Activated CD4-positive, alpha-beta T cell treated with anti-CD3 and anti-CD28 coated beads for 36 hours (primary cell): ENCODE measurements at regions of chr9 and their contacts with region 1.

Region 1: DNA sequence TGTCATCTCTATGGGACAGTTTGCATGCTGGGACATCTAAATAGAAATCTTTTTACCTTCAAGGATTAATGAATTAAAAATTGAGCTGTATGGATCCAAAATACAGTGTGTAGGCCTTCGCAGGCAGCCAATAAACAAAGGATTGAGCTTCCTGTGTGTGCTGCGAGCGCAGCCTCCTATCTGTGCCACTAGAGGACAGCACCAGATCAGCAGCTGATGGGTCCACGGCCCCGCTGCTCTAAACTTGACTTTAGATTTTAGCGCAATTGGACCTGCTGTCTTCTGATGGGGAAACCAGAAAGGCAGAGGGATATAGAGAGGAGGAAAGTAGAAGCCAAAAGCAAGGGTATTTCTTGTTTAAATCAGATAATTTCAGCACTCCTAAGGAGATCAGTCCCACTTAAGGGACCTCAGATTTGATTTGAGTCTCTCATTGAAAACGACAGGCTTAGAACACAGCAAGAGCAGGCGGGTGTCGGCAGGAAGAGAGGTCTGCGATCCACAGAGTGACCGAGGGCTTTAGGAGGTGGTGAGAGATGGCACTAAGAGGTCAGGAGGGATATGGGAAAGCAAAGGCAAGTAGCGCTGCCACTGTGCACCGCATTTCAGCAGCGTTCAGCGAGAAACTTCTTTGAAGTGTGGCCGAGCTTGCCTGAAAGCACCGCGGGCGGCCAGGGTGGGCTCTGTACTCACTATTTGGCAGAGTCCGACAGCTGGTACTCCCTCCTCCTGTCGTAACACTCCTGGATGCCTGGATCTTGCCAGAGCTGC is 214.3 kb downstream of the GNA14 start:
- DNase-seq: peak; percentile 77
- ATAC-seq: peak; percentile 99
- H3K4me3 Mint-ChIP-seq: no peak overlapping the region
- H3K27ac Mint-ChIP-seq: no peak overlapping the region
- H3K4me1 Mint-ChIP-seq: peaks cover 3% of the 10 kb centered on the region
- H3K27me3 Mint-ChIP-seq: no peaks in the 10 kb centered on the region

Region 2: GRCh38 chr9:77251050-77251449 is 182.8 kb before region 1 on chr9:
- CTCF ChIA-PET with region 1: no interaction called
- POLR2A ChIA-PET with region 1: no interaction called
- intact Hi-C with region 1: no loop called
- DNase-seq: no peak
- ATAC-seq: no peak
- H3K4me3 Mint-ChIP-seq: no peak overlapping the region
- H3K27ac Mint-ChIP-seq: no peak overlapping the region
- H3K4me1 Mint-ChIP-seq: no peaks in the 10 kb centered on the region
- H3K27me3 Mint-ChIP-seq: no peaks in the 10 kb centered on the region

Region 3: GRCh38 chr9:77475641-77476473 is 42.0 kb after region 1 on chr9:
- CTCF ChIA-PET with region 1: interaction called, 13 read pairs
- POLR2A ChIA-PET with region 1: no interaction called
- intact Hi-C with region 1: no loop called
- DNase-seq: peak; percentile 84
- ATAC-seq: peak; percentile 99
- H3K4me3 Mint-ChIP-seq: peak overlapping the region; percentile 9
- H3K27ac Mint-ChIP-seq: peak overlapping the region; percentile 94
- H3K4me1 Mint-ChIP-seq: peaks cover 31% of the 10 kb centered on the region
- H3K27me3 Mint-ChIP-seq: no peaks in the 10 kb centered on the region

Region 4: GRCh38 chr9:77575785-77576184 is 141.9 kb after region 1 on chr9:
- CTCF ChIA-PET with region 1: interaction called, 11 read pairs
- POLR2A ChIA-PET with region 1: no interaction called
- intact Hi-C with region 1: no loop called
- DNase-seq: peak; percentile 41
- ATAC-seq: no peak
- H3K4me3 Mint-ChIP-seq: no peak overlapping the region
- H3K27ac Mint-ChIP-seq: no peak overlapping the region
- H3K4me1 Mint-ChIP-seq: no peaks in the 10 kb centered on the region
- H3K27me3 Mint-ChIP-seq: peaks cover 3% of the 10 kb centered on the region

Region 5: GRCh38 chr9:77751341-77752091 is 317.7 kb after region 1 on chr9:
- CTCF ChIA-PET with region 1: interaction called, 3 read pairs
- POLR2A ChIA-PET with region 1: no interaction called
- intact Hi-C with region 1: loop called (anchors 1 kb)
- DNase-seq: peak; percentile 34
- ATAC-seq: peak; percentile 71
- H3K4me3 Mint-ChIP-seq: no peak overlapping the region
- H3K27ac Mint-ChIP-seq: peak overlapping the region; percentile 52
- H3K4me1 Mint-ChIP-seq: peaks cover 39% of the 10 kb centered on the region
- H3K27me3 Mint-ChIP-seq: no peaks in the 10 kb centered on the region

Region 6: DNA sequence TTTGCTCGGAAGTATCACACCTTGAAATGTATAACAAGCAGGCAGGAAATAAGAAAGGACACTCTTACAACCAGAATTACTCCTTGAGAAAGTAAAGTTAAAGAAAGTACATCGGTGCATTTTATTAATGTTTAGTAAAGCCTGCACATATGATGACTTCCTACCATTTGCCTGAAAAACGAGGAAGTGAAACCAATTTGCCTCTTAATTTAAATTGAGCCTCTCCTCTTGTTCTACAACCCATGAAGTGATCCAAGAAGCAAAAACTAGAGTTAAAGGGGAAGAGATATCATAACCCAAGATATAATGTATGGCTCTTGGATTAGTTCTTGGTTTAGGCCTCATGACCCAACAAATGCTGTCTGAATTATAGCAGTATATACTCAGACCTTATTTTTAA is 502.1 kb after region 1 on chr9:
- CTCF ChIA-PET with region 1: no interaction called
- POLR2A ChIA-PET with region 1: no interaction called
- intact Hi-C with region 1: no loop called
- DNase-seq: no peak
- ATAC-seq: no peak
- H3K4me3 Mint-ChIP-seq: no peak overlapping the region
- H3K27ac Mint-ChIP-seq: no peak overlapping the region
- H3K4me1 Mint-ChIP-seq: peaks cover 27% of the 10 kb centered on the region
- H3K27me3 Mint-ChIP-seq: no peaks in the 10 kb centered on the region

Region 7: DNA sequence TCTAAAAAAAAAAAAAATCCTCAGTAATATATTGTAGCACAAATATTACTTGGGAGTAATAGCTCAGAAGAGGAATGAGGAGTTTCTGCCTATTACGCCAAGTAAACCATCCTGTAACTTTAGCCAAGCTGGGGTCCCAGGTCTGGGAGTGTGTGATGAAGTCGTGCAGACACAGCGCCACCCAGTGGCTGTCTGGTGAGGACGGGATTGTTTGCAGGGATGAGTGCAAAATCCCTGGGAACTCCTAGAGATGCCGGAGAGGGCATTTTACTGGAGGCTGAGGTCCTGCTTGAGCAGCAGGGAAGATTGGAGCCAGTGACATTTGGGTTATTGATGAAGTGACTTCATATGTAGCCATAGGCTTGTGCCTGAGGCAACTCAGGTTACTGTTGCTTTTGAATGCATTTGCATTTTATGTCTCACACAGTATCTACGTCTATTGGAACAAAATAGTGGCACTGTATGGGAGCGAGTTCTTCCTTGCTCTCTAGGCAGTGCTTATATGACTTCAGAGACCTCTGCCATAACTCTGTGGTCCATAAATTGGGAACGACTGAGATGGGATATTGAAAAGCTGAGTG is 935.9 kb after region 1 on chr9:
- CTCF ChIA-PET with region 1: no interaction called
- POLR2A ChIA-PET with region 1: no interaction called
- intact Hi-C with region 1: loop called in 1 of 2 experiments (anchors 5 kb)
- DNase-seq: peak; percentile 75
- ATAC-seq: peak; percentile 36
- H3K4me3 Mint-ChIP-seq: no peak overlapping the region
- H3K27ac Mint-ChIP-seq: no peak overlapping the region
- H3K4me1 Mint-ChIP-seq: no peaks in the 10 kb centered on the region
- H3K27me3 Mint-ChIP-seq: peaks cover 13% of the 10 kb centered on the region